PC-9 (cell line): ENCODE measurements at regions of chr17 and their contacts with region 1.

Region 1: DNA sequence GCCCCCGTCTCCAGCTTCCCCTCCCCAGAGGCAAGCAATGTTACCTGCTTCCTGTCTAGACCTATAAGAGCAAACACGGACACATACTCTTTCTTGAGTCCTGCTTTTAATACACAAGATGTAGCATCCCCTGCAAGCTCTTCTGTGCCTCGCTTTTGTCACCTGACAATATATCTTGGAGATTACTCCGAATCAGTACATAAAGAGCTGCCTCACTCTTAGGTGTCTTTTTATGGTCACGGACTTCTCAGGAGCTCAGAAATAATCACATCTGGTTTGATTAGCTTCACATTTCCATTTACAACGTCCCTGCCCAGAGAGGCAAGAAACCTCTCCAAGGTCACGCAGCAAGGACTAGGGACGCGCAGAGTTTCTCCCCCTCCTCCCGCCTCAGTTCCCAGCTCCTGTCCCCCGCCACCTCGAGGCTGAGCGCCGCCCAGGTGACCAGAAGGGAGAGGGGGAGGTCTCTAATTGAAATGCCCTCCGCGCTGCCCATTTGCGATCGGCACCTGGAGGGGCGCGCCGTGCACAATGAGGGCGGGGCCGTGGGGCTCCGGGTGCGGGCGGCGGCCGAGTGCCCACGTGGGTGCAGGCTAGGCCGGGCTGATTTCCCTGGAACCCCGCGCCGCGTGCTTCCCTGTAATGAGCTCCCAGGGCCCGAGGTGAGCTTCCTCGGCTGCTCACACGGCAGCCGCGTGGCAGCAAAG is 13.8 kb upstream of the SEZ6 start:
- DNase-seq: peak in 1 of 2 experiments; percentile 12
- H3K4me3 ChIP-seq: peak overlapping the region; percentile 8; the same call in 1 of the 2 replicates
- H3K27ac ChIP-seq: no peak overlapping the region
- H3K4me1 ChIP-seq: no peaks in the 10 kb centered on the region
- H3K27me3 ChIP-seq: peaks cover 96% of the 10 kb centered on the region
- CTCF ChIP-seq: no peak

Region 2: DNA sequence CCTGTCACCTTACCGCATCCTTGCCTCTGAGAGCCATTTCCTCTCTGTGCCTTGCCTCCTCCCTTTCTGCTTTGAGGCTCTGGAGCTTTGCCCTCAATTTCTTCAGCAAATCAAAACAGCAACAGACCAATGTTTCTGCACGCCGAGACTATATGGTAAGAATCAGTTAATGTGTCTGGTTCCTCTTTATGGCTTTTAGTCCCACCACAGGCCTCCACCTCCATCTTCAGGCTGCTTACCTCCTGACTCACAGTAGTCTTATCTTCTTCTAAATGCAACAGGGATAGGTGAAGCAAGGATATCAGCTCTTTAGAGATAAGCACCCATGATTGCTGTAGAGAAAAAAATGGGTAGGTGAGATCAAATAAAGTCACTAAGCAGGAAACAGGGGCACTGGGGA is 433.8 kb before region 1 on chr17:
- CTCF ChIA-PET with region 1: interaction called, 21 read pairs
- POLR2A ChIA-PET with region 1: no interaction called
- intact Hi-C with region 1: no loop called
- DNase-seq: no peak
- H3K4me3 ChIP-seq: no peak overlapping the region
- H3K27ac ChIP-seq: no peak overlapping the region
- H3K4me1 ChIP-seq: no peaks in the 10 kb centered on the region
- H3K27me3 ChIP-seq: no peaks in the 10 kb centered on the region
- CTCF ChIP-seq: no peak